Activated CD4-positive, alpha-beta memory T cell treated with anti-CD3 and anti-CD28 coated beads for 36 hours (primary cell): ENCODE measurements at regions of chr22 and their contacts with region 1.

Region 1: GRCh38 chr22:44684506-44685383 is 17.3 kb upstream of the PRR5 start:
- DNase-seq: peak; percentile 94
- H3K4me3 Mint-ChIP-seq: peak overlapping the region; percentile 51
- H3K27ac Mint-ChIP-seq: peak overlapping the region; percentile 84
- H3K4me1 Mint-ChIP-seq: peaks cover 47% of the 10 kb centered on the region
- H3K27me3 Mint-ChIP-seq: no peaks in the 10 kb centered on the region

Region 2: GRCh38 chr22:44427611-44428470 is 256.9 kb before region 1 on chr22:
- CTCF ChIA-PET with region 1: no interaction called
- POLR2A ChIA-PET with region 1: no interaction called
- intact Hi-C with region 1: no loop called
- DNase-seq: no peak
- H3K4me3 Mint-ChIP-seq: no peak overlapping the region
- H3K27ac Mint-ChIP-seq: no peak overlapping the region
- H3K4me1 Mint-ChIP-seq: no peaks in the 10 kb centered on the region
- H3K27me3 Mint-ChIP-seq: peaks cover 4% of the 10 kb centered on the region

Region 3: DNA sequence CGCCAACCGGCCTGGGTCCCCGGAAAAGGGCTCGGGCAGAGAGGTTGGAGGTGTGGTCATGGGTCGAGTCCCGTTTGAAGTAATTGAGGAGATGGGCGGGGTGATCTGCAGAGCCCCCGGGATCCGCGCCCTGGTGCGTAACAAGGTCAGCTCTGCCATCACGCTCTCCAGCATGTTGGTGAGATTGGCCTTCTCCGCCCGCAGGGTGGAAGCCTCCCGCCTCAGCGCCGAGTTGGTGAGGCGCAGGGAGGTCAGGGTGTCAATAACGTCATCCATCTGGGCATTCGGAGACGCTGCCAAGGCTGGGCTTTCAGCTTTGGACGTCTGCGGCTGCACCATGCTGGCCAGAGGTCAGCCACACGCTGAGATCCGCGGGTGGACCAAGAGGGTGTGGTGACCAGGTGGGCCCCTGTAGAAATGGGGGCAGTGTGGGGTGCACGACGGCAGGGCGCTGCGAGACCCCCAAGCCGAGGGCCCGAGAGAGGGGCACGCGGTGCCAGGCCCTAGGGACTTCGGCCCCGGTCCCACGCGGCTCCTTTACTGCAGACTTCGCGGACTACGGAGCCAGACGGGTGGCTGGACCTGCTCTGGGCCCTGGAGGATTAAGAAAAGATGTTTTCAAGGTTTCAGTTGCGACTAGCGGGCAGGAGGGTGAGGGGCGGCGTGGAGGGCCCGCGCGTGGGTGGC is 187.4 kb before region 1 on chr22:
- CTCF ChIA-PET with region 1: no interaction called
- POLR2A ChIA-PET with region 1: no interaction called
- intact Hi-C with region 1: loop called (anchors 5 kb)
- DNase-seq: no peak
- H3K4me3 Mint-ChIP-seq: peak overlapping the region; percentile 74
- H3K27ac Mint-ChIP-seq: peak overlapping the region; percentile 74
- H3K4me1 Mint-ChIP-seq: peaks cover 36% of the 10 kb centered on the region
- H3K27me3 Mint-ChIP-seq: no peaks in the 10 kb centered on the region

Region 4: DNA sequence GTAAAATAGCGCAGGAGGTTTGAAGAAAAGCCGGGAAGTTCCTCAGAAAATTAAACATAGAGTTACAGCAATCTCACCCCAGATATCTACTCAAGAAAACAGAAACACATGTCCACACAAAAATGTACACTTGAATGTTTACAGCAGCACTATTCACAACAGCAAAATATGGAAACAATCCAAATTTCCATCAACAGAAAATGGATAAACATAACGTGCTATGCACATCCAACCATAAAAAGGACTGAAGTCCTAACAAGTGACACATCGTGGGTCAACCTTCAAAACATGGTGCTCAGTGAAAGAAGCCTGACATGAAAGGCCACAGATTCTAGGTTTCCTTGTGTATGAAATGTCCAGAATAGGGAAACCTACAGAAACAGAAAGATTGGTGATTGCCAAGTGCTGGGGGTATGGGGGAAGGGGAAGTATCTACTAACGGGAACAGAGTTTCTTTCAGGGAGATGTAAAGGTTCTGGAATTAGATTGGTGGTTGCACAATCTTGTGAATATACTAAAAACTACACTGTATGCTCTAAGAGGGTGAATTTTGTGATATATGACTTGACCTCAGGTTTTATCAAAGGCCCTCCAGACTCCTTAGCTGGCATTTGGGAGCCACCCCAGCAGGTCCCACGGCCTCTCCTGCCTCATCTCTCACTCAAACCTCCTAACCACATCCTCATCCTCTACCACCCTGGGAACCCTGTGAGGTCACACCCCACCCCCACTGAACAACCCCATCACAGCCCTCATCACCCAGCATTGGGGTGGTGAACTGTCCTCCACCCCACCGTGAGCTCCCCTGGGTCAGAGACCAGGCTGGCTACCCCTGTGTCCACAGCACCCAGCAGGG is 52.0 kb before region 1 on chr22:
- CTCF ChIA-PET with region 1: no interaction called
- POLR2A ChIA-PET with region 1: no interaction called
- intact Hi-C with region 1: no loop called
- DNase-seq: peak; percentile 35
- H3K4me3 Mint-ChIP-seq: no peak overlapping the region
- H3K27ac Mint-ChIP-seq: no peak overlapping the region
- H3K4me1 Mint-ChIP-seq: no peaks in the 10 kb centered on the region
- H3K27me3 Mint-ChIP-seq: no peaks in the 10 kb centered on the region

Region 5: DNA sequence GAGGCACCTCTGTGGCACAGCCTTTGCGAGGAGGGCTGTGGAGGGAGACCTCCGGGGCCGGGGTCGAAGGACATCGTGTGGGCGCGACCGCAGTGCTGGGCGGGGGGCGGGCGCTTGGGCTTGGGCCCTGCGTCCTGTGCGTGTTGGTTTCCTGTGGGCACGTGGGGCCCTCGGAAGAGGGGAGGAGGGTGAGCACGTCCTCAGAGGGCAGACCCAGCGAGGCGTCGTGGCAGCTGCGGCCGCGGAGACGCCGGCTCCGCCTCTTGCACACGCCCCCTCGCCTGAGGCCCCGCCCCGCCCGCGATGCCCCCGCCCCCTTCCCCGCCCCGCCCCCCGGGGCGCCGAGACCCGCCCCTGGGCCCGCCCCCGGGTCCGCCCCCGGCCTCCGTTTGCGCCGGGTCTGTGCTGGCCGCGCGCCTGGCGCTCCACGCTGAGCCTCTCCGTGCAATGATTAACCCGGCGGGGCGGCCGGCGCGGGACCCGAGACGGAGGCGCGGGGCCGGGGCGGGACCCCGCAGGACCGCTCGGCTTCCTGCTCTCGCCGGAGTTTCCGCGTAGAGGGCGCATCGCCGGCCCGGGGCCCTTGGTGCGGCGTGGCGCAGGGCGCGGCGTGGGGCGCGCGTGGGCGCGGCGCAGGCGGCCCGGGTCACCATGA is 17.2 kb after region 1 on chr22 and contains the start of gene PRR5:
- CTCF ChIA-PET with region 1: interaction called, 14 read pairs
- POLR2A ChIA-PET with region 1: no interaction called
- intact Hi-C with region 1: loop called (anchors 2 kb)
- DNase-seq: peak; percentile 88
- H3K4me3 Mint-ChIP-seq: peak within 1 kb of the TSS; percentile 68
- H3K27ac Mint-ChIP-seq: peak within 1 kb of the TSS; percentile 60
- H3K4me1 Mint-ChIP-seq: peaks cover 10% of the 10 kb centered on the region
- H3K27me3 Mint-ChIP-seq: no peaks in the 10 kb centered on the region
- total RNA-seq, gene PRR5: 10.3 to 11.8 TPM

Region 6: DNA sequence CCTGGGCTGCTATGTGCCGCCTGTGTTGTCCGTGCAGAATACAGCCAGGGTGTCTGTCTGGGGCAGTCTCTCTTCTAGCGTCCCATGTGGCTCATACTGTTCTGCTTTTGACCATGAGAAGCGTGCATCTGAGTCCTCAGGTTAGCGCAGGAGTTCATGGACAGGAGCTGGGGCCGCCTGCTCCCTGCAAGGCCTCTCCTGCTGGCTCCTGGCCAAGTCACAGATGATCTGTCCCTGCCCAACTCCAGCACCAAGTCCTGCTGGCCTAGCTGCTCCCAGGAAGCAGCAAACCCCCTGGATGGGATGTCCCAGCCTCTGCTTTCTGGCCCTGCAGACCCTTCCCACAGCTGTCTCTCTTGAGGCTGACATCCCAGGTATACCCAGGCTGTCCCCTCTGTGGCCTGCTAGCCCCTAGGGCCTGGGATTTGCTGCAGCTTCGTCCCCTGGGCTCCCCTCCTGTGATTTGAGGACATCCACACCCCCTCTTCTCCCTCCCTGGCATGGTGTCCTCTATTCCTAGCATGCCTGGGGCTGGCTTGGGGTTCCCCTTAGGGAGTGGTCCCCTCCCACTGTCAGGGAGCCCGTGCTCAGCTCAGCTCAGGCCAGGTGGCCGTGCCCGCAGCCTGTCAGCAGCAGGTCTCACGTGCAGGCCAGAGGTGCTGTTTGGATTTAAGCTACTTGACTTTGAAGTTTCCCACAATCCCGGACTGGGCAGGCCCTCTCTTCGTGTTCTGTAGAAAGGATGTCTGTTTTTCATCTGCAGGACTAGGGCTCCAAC is 35.0 kb after region 1 on chr22:
- CTCF ChIA-PET with region 1: interaction called, 10 read pairs
- POLR2A ChIA-PET with region 1: no interaction called
- intact Hi-C with region 1: no loop called
- DNase-seq: no peak
- H3K4me3 Mint-ChIP-seq: no peak overlapping the region
- H3K27ac Mint-ChIP-seq: no peak overlapping the region
- H3K4me1 Mint-ChIP-seq: peaks cover 7% of the 10 kb centered on the region
- H3K27me3 Mint-ChIP-seq: no peaks in the 10 kb centered on the region

Region 7: GRCh38 chr22:44838316-44839016 is 153.7 kb after region 1 on chr22:
- CTCF ChIA-PET with region 1: no interaction called
- POLR2A ChIA-PET with region 1: no interaction called
- intact Hi-C with region 1: no loop called
- DNase-seq: no peak
- H3K4me3 Mint-ChIP-seq: no peak overlapping the region
- H3K27ac Mint-ChIP-seq: no peak overlapping the region
- H3K4me1 Mint-ChIP-seq: no peaks in the 10 kb centered on the region
- H3K27me3 Mint-ChIP-seq: peaks cover 11% of the 10 kb centered on the region